ENCODE measurements at regions of chr2 and their contacts with region 1.

Region 1: DNA sequence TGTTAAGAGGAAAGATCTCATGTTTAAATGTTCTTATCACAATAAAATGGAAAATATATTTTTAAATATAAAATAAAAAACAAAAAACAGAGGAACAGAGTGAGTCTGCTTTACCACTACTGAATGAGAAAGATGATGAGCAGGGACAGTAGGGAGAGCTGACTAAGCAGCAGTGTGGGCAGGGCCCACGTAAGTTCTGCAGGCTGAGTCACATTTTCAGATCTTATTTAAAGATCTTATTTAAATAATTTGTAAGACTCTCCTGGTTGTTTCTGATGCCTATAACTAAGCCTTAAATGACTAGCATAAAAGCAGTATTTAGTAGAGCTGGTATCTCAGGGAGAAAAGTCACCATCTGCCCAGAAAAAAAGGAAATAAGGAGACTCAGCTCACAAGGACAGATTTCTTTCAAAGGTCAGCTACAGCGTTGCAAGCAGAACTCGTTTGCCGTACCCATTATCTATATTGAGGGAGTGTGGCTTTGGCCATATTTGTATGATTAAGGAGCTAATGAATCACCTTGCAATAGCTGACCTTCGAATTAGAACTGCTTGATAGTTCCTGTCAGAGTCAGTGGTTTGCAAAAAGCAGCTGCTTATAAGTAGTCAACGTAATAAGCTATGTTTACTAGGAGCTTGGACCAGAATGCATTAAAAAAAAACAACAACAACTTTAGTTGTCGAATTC is 322.1 kb upstream of the CHAC2 start:
- DNase-seq: peak; percentile 76
- ATAC-seq: peak; percentile 93
- H3K4me3 ChIP-seq: peak overlapping the region; percentile 54
- H3K27ac ChIP-seq: peak overlapping the region; percentile 81
- H3K4me1 ChIP-seq: peaks cover 18% of the 10 kb centered on the region
- H3K27me3 ChIP-seq: no peaks in the 10 kb centered on the region
- CTCF ChIP-seq: no peak

Region 2: GRCh38 chr2:53475320-53475719 is 29.8 kb after region 1 on chr2:
- CTCF ChIA-PET with region 1: no interaction called
- POLR2A ChIA-PET with region 1: no interaction called
- intact Hi-C with region 1: loop called (anchors 1 kb)
- DNase-seq: peak; percentile 97
- ATAC-seq: peak; percentile 95
- H3K4me3 ChIP-seq: peak overlapping the region; percentile 46; the same call in 1 of the 2 replicates
- H3K27ac ChIP-seq: peak overlapping the region; percentile 99
- H3K4me1 ChIP-seq: peaks cover 41% of the 10 kb centered on the region
- H3K27me3 ChIP-seq: no peaks in the 10 kb centered on the region
- CTCF ChIP-seq: no peak